PC-3 (cell line): ENCODE measurements at regions of chr7 and their contacts with region 1.

Region 1: DNA sequence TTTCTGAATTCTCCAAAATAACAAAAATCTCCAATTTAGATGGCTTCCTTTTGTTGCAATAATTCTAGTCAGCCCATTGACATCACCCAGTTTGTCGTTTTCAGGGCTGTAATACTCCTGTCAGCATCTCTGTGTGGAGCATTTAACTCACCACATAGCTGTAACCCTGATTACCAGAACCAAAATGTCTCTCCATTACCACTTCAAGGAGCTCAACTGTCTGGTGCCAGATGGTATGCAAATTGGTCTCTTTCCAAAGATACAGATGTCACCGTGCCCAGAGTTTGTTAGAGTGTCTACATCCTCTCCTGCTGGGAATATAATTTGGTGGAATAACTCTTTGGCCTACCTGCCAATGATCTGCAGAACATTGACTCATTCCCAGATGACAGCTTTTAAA is 350.3 kb upstream of the POT1 start:
- DNase-seq: no peak
- ATAC-seq: no peak
- H3K4me3 ChIP-seq: no peak overlapping the region
- H3K27ac ChIP-seq: no peak overlapping the region
- H3K4me1 ChIP-seq: no peaks in the 10 kb centered on the region
- H3K27me3 ChIP-seq: no peaks in the 10 kb centered on the region
- CTCF ChIP-seq: no peak

Region 2: DNA sequence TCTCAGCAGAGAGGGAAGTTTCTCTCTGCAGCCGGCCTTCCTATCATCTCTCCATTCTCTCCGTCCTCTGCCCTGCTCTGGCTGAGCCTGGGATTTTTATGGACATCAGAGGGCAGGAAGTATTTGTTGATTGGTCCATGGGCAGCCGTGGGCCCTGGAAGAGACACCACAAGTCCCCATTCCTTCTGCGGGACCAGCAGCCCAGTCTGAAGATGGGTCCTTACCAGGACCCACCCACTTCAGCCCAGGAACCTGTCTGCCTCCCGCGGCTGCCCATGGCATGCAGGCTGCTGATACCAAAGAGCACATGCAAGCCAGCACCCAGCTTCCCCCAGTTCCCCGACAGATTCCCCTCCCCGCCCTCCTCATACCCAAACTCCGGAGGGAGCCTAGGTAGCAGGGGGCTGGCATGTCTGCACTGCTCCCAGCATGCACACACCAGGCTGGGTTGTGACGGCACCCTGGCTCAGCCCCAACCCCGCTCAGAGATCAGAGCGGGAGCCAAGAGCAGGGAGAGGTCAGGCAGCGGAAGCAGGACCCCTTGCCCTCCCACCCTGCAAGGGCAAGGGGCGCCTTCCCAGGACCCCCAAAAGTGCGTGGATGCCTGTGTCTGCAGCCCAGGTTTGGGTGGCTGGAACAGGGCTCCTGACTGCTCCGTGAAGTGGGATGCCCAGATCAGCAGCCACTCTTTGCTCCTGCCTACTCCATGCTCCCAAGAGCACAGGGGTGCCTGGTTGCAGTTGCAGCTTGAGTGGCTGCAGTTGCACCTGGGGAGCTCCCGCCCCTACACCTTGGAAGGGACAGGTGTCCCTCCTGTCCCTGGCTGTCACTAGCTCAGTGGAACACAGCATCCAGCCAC is 188.3 kb after region 1 on chr7:
- CTCF ChIA-PET with region 1: no interaction called
- POLR2A ChIA-PET with region 1: no interaction called
- intact Hi-C with region 1: no loop called
- DNase-seq: no peak
- ATAC-seq: no peak
- H3K4me3 ChIP-seq: no peak overlapping the region
- H3K27ac ChIP-seq: no peak overlapping the region
- H3K4me1 ChIP-seq: no peaks in the 10 kb centered on the region
- H3K27me3 ChIP-seq: no peaks in the 10 kb centered on the region
- CTCF ChIP-seq: no peak

Region 3: GRCh38 chr7:125480762-125481161 is 200.8 kb after region 1 on chr7:
- CTCF ChIA-PET with region 1: no interaction called
- POLR2A ChIA-PET with region 1: no interaction called
- intact Hi-C with region 1: no loop called
- DNase-seq: no peak
- ATAC-seq: no peak
- H3K4me3 ChIP-seq: no peak overlapping the region
- H3K27ac ChIP-seq: no peak overlapping the region
- H3K4me1 ChIP-seq: peaks cover 13% of the 10 kb centered on the region; the same call in 1 of the 2 replicates
- H3K27me3 ChIP-seq: no peaks in the 10 kb centered on the region
- CTCF ChIP-seq: no peak

Region 4: DNA sequence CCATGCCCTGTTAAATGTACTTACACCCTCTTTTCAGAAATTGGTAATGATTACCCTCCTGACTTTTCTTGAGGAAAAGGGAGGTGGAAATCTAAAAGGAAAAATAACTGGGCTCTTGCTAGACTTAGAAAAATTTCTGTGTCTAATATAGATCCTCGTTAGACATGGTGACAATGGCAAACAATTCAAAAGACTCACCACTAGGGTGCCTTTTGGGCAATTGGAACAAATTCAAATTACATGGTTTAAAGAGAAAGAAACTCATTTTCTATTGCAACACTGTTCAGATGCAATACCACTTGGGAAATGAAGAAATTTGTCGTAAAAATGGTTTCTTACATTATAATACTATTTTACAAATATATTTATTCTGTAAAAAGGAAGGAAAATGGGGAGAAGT is 1022.7 kb after region 1 on chr7:
- CTCF ChIA-PET with region 1: no interaction called
- POLR2A ChIA-PET with region 1: no interaction called
- intact Hi-C with region 1: loop called (anchors 5 kb)
- DNase-seq: no peak
- ATAC-seq: no peak
- H3K4me3 ChIP-seq: no peak overlapping the region
- H3K27ac ChIP-seq: no peak overlapping the region
- H3K4me1 ChIP-seq: no peaks in the 10 kb centered on the region
- H3K27me3 ChIP-seq: no peaks in the 10 kb centered on the region
- CTCF ChIP-seq: no peak